Lower leg skin (tissue), 4 donors: ENCODE measurements at regions of chr4 and their contacts with region 1.

Region 1: GRCh38 chr4:141638225-141638624 is 1.8 kb downstream of the IL15 start:
- DNase-seq: no peak
- H3K4me3 ChIP-seq: no peak overlapping the region
- CTCF ChIP-seq: no peak
- POLR2A ChIP-seq: no peak

Region 2: GRCh38 chr4:141659539-141659938 is 21.3 kb after region 1 on chr4:
- intact Hi-C with region 1: loop called (anchors 2 kb)
- DNase-seq: no peak
- H3K4me3 ChIP-seq: no peak overlapping the region
- CTCF ChIP-seq: no peak
- POLR2A ChIP-seq: no peak